Activated B cell treated with CpG ODN at 0.5 μM for 24 hours (primary cell): ENCODE measurements at regions of chr12 and their contacts with region 1.

Region 1: DNA sequence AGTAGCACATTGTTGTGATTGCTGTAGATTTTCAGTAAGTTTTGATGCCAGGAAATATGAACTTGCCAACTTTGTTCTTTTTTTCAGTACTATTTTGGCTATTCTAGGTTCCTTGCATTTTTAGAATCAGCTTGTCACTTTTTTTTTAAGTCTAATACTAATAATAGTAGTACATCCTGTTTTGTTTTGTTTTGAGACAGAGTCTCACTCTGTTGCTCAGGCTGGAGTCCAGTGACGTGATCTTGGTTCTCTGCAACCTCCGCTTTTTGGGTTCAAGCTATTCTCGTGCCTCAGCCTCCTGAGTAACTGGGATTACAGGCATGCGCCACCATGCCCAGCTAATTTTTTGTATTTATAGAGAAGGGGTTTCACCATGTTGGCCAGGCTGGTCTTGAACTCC is 16.5 kb downstream of the PWP1 start:
- DNase-seq: no peak
- ATAC-seq: peak; percentile 40
- H3K4me3 Mint-ChIP-seq: no peak overlapping the region
- H3K27ac Mint-ChIP-seq: peak overlapping the region; percentile 61
- H3K4me1 Mint-ChIP-seq: peaks cover 31% of the 10 kb centered on the region
- H3K27me3 Mint-ChIP-seq: no peaks in the 10 kb centered on the region
- CTCF ChIP-seq: no peak

Region 2: DNA sequence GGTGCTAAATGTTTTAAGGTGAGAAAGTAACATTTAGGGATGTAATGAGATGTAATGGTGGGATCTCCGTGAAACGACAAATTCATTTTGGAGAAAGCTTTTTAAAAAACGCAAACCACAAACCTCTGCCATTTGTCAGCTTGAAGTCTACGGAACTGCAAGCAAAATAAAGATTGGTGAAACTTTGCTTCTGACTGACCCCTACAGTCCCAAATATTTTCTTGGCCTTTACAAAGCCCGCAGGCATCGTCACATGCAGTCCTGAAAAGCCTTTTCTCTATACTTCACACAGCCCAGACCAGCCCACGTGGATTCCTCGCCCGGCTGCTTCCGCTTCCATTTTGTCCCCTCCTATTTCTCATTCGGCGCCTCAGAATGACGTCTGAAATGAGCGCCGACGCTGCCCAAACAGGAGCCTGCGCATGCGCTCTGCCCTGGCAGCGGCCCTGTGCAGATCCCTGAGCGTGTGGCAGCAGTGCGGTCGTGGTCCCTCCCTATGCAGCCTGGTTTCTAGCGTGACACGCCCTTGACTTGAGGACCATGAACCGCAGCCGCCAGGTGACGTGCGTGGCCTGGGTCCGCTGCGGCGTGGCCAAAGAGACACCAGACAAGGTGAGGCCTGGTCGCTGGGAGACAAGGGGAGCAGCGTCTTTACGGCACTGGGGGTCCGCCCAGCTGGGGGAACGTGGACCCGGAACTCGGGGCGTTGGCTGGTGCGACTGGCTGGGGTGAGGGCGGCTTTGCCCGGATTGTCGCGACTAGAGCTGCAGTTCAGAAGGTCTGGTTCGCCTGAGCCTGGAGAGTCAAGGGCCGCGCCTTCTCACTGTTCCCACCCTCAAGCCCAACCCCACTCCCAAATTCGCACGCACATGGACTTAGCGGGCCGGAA is 16.5 kb before region 1 on chr12 and contains the start of gene PWP1:
- CTCF ChIA-PET with region 1: no interaction called
- POLR2A ChIA-PET with region 1: interaction called, 10 read pairs
- intact Hi-C with region 1: no loop called
- DNase-seq: peak; percentile 93
- ATAC-seq: peak; percentile 90
- H3K4me3 Mint-ChIP-seq: peak within 1 kb of the TSS; percentile 96
- H3K27ac Mint-ChIP-seq: peak within 1 kb of the TSS; percentile 97
- H3K4me1 Mint-ChIP-seq: peaks cover 23% of the 10 kb centered on the region
- H3K27me3 Mint-ChIP-seq: no peaks in the 10 kb centered on the region
- CTCF ChIP-seq: no peak
- total RNA-seq, gene PWP1: 49.4 and 53.5 TPM in 2 replicates

Region 3: GRCh38 chr12:107718606-107719005 is 16.5 kb after region 1 on chr12:
- CTCF ChIA-PET with region 1: no interaction called
- POLR2A ChIA-PET with region 1: no interaction called
- intact Hi-C with region 1: no loop called
- DNase-seq: no peak
- ATAC-seq: no peak
- H3K4me3 Mint-ChIP-seq: no peak overlapping the region
- H3K27ac Mint-ChIP-seq: no peak overlapping the region
- H3K4me1 Mint-ChIP-seq: peaks cover 8% of the 10 kb centered on the region
- H3K27me3 Mint-ChIP-seq: no peaks in the 10 kb centered on the region
- CTCF ChIP-seq: no peak